ENCODE measurements at regions of chr3 and their contacts with region 1.

Region 1: GRCh38 chr3:150721285-150722130 is 17.8 kb upstream of the ERICH6 start:
- DNase-seq: no peak
- ATAC-seq: peak; percentile 85
- H3K4me3 ChIP-seq: no peak overlapping the region
- H3K27ac ChIP-seq: no peak overlapping the region
- H3K4me1 ChIP-seq: no peaks in the 10 kb centered on the region
- H3K27me3 ChIP-seq: no peaks in the 10 kb centered on the region
- CTCF ChIP-seq: peak; percentile 86

Region 2: GRCh38 chr3:150528354-150528797 is 193.1 kb before region 1 on chr3:
- CTCF ChIA-PET with region 1: no interaction called
- POLR2A ChIA-PET with region 1: no interaction called
- in situ Hi-C with region 1: no loop called
- intact Hi-C with region 1: loop called (anchors 10 kb)
- DNase-seq: no peak
- ATAC-seq: no peak
- H3K4me3 ChIP-seq: no peak overlapping the region
- H3K27ac ChIP-seq: no peak overlapping the region
- H3K4me1 ChIP-seq: 0 out of 2 replicates have a peak, but pooled peaks cover 5% of the 10 kb centered on the region
- H3K27me3 ChIP-seq: no peaks in the 10 kb centered on the region
- CTCF ChIP-seq: no peak; the same call in 1 of the 2 replicates

Region 3: DNA sequence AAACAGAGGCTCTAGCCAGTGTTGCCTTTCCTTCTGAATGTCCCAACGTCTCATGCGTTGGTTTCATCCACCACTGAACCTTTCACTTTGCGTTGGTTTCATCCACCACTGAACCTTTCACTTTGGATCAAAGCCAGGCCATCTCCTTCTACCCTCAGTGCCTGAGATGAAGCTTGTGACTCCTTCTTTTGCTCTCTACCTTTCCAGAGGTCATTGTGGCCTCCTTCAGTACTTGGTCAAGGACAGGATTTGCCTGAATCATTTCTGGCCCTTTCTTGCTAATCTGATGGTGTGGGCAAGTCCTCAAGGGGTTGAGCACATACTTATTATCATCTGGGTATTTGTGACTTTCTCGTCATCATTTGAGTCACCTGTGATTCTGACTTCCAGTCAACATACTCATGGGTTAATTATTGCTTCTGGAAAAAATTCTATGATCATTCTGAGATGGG is 68.4 kb before region 1 on chr3:
- CTCF ChIA-PET with region 1: no interaction called
- POLR2A ChIA-PET with region 1: no interaction called
- in situ Hi-C with region 1: no loop called
- intact Hi-C with region 1: no loop called
- DNase-seq: no peak
- ATAC-seq: no peak
- H3K4me3 ChIP-seq: no peak overlapping the region
- H3K27ac ChIP-seq: no peak overlapping the region
- H3K4me1 ChIP-seq: no peaks in the 10 kb centered on the region
- H3K27me3 ChIP-seq: no peaks in the 10 kb centered on the region; the same call in 1 of the 2 replicates
- CTCF ChIP-seq: no peak

Region 4: GRCh38 chr3:150771600-150771999 is 50.1 kb after region 1 on chr3:
- CTCF ChIA-PET with region 1: no interaction called
- POLR2A ChIA-PET with region 1: no interaction called
- in situ Hi-C with region 1: no loop called
- intact Hi-C with region 1: no loop called
- DNase-seq: no peak
- ATAC-seq: no peak
- H3K4me3 ChIP-seq: no peak overlapping the region
- H3K27ac ChIP-seq: no peak overlapping the region
- H3K4me1 ChIP-seq: no peaks in the 10 kb centered on the region
- H3K27me3 ChIP-seq: peaks cover 4% of the 10 kb centered on the region; the same call in 1 of the 2 replicates
- CTCF ChIP-seq: no peak

Region 5: DNA sequence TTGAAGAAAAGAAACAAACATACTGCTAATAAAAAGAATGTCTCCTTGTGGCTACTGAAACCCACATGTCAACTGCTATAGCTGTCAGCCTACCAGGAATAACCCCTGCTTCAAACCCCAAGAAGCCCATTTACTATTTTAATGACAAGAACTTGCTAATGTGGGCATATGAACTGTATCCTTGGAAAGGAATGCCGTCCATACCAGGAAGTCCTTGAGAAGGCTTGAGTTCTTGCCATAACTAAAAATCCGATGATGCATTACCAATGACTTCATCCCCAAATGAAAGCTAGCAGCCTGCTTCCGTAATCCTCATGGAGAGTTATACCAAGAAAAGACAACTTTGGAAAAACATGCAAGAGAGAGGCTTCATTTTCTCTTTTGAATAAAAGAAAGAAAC is 148.9 kb after region 1 on chr3:
- CTCF ChIA-PET with region 1: no interaction called
- POLR2A ChIA-PET with region 1: no interaction called
- in situ Hi-C with region 1: no loop called
- intact Hi-C with region 1: loop called (anchors 1 kb)
- DNase-seq: no peak
- ATAC-seq: no peak
- H3K4me3 ChIP-seq: no peak overlapping the region
- H3K27ac ChIP-seq: no peak overlapping the region
- H3K4me1 ChIP-seq: no peaks in the 10 kb centered on the region
- H3K27me3 ChIP-seq: peaks cover 7% of the 10 kb centered on the region; the same call in 1 of the 2 replicates
- CTCF ChIP-seq: no peak

Region 6: GRCh38 chr3:150922611-150923010 is 201.1 kb after region 1 on chr3:
- CTCF ChIA-PET with region 1: no interaction called
- POLR2A ChIA-PET with region 1: no interaction called
- in situ Hi-C with region 1: no loop called
- intact Hi-C with region 1: no loop called
- DNase-seq: no peak
- ATAC-seq: no peak
- H3K4me3 ChIP-seq: no peak overlapping the region
- H3K27ac ChIP-seq: no peak overlapping the region
- H3K4me1 ChIP-seq: 0 out of 2 replicates have a peak, but pooled peaks cover 3% of the 10 kb centered on the region
- H3K27me3 ChIP-seq: peaks cover 42% of the 10 kb centered on the region
- CTCF ChIP-seq: no peak

Region 7: DNA sequence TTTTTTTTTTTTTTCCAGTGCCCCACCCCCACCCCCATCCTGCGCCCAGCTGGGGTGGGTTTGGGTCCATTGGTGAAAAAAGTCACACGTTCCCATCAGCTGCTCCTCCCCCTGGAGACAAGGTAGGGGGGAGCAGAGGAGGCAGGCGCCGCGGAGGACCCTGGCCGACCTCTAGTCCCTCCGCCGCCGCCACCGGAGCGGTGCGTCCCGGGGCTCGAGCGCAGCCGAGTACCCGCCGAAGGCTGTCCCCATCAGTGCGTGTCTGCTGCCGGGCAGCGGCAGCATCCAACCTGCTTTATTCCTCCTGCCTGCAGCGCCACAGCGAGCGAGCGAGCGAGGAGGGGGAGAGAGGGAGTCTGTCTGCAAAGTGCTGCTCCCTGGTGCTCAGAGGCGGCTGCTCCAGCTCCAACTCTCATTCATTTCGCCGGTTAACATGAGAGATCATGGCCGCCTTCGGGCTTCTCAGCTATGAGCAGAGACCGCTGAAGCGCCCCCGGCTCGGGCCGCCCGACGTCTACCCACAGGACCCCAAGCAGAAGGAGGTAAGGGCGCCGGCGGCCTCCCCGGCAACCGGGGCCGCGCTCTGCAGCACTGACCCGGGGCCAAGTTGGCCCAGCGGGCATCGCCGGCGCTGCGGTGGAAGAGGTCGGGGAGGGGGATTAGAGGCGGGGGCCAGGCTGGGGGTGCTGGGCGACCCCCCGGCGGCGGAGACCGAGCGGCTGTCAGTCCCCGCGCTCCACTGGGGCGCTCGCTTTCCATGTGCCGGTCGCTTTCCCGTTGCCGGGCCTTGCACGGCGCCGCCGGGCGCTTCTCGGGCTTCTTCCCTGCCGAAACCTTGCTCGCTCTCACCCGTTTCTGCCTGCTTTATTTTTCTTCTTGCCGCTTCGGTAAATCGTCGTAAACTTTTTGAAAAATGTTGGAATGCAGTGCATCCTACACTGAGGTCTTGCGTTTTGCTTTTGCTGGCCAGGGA is 365.3 kb after region 1 on chr3:
- CTCF ChIA-PET with region 1: no interaction called
- POLR2A ChIA-PET with region 1: no interaction called
- in situ Hi-C with region 1: no loop called
- intact Hi-C with region 1: loop called (anchors 10 kb)
- DNase-seq: peak; percentile 15
- ATAC-seq: peak; percentile 93
- H3K4me3 ChIP-seq: peak overlapping the region; percentile 56 to 65
- H3K27ac ChIP-seq: no peak overlapping the region
- H3K4me1 ChIP-seq: no peaks in the 10 kb centered on the region; the same call in 1 of the 2 replicates
- H3K27me3 ChIP-seq: peaks cover 21% of the 10 kb centered on the region
- CTCF ChIP-seq: peak; percentile 73